Dorsolateral prefrontal cortex (tissue), 120 donors: ENCODE measurements at regions of chr5 and their contacts with region 1.

Region 1: GRCh38 chr5:17216176-17216973 is 1.1 kb upstream of the BASP1 start:
- DNase-seq: peak; percentile 71 to 84 (median 80)
- H3K4me3 ChIP-seq: peak overlapping the region; percentile 36 to 81 (median 67)
- H3K27ac ChIP-seq: peak overlapping the region in 58 of 59 donors; percentile 3 to 95 (median 82)
- H3K27me3 ChIP-seq: peaks cover 0 to 30% (median 0%) of the 10 kb centered on the region in 45 donors
- CTCF ChIP-seq: peak; percentile 69 to 96 (median 86)

Region 2: GRCh38 chr5:17400724-17401464 is 184.5 kb after region 1 on chr5:
- intact Hi-C with region 1: loop called in 1 of 2 experiments (anchors 5 kb)
- DNase-seq: no peak
- H3K4me3 ChIP-seq: no peak overlapping the region
- H3K27ac ChIP-seq: no peak overlapping the region
- H3K27me3 ChIP-seq: peaks cover 0 to 29% (median 0%) of the 10 kb centered on the region in 45 donors
- CTCF ChIP-seq: no peak

Region 3: DNA sequence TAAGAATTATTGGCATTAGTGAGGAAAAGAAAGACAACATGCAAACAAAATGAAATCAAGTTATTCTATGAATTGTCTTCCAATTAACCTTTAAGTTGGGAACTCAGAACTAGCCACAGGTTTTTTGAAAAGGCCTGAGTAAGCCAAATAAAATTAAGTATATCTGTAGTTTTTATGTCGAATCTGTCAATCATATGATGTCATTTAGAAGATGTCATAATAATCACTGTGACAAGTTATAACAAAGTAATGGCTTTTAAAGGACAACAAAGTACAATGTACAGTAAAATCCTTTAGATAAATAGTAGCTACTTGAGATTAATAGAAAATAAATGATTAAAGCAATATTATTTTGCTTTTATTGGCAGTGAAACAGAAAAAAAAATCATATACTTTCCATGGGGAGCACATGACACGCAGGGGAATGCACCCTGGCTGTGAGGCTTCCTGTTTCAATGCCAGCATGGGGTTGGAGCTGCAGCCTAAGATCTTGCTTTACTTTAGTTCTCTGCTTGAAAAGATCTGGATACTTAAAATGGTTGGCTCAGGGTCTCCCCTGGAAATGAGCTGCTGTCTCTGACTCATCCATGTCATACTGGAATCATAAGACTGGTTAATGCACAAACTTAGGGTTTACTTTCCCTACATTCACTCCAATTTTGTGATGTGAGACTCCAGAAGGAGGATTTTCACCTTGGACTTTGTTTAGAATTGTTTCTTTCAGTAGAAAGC is 702.2 kb after region 1 on chr5:
- intact Hi-C with region 1: loop called in 1 of 2 experiments (anchors 5 kb)
- DNase-seq: no peak
- H3K4me3 ChIP-seq: no peak overlapping the region
- H3K27ac ChIP-seq: peak overlapping the region in 47 of 59 donors; percentile 5 to 80 (median 52)
- H3K27me3 ChIP-seq: no peaks in the 10 kb centered on the region
- CTCF ChIP-seq: no peak

Region 4: GRCh38 chr5:18113721-18114120 is 897.3 kb after region 1 on chr5:
- intact Hi-C with region 1: loop called (anchors 5 kb)
- DNase-seq: peak in 2 of 10 donors; percentile 10 to 32
- H3K4me3 ChIP-seq: peak overlapping the region in 34 of 59 donors; percentile 5 to 48 (median 26)
- H3K27ac ChIP-seq: peak overlapping the region in 46 of 59 donors; percentile 0 to 85 (median 58)
- H3K27me3 ChIP-seq: peaks cover 0 to 2% (median 0%) of the 10 kb centered on the region in 45 donors
- CTCF ChIP-seq: peak in 55 of 56 donors; percentile 17 to 64 (median 49)

Region 5: GRCh38 chr5:18305297-18305924 is 1089.0 kb after region 1 on chr5:
- intact Hi-C with region 1: loop called (anchors 5 kb)
- DNase-seq: peak in 3 of 10 donors; percentile 40 to 58 (median 44)
- H3K4me3 ChIP-seq: peak overlapping the region in 25 of 59 donors; percentile 1 to 46 (median 21)
- H3K27ac ChIP-seq: peak overlapping the region in 3 of 59 donors; percentile 5 to 25 (median 11)
- H3K27me3 ChIP-seq: peaks cover 0 to 2% (median 0%) of the 10 kb centered on the region in 45 donors
- CTCF ChIP-seq: peak; percentile 54 to 93 (median 76)

Region 6: DNA sequence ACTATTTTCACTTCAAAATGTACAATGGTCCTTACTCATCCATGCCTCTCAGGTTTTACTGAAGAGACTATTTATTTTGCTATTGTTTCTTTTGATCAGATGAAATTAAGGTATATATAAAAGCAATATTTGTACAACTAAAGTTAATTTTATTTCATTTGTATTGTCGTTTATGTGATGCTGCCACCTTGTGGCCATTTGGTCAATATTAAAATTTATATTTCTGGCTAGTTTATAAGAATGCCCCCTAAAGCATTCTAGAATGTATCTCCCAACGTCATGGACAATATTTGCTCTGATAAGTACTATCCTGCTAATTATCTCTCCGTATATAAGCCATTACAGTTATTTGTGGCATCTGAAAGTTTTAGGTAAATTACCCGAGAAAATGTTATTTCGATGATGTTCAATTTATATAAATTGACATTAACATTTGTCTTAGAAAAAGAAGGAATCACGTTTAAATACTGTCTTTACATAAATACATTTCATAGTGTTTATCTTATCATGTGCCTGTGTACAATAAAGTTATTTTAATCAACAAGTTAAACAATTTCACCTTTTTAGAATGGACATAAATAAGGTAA is 1097.9 kb after region 1 on chr5:
- intact Hi-C with region 1: loop called (anchors 5 kb)
- DNase-seq: no peak
- H3K4me3 ChIP-seq: no peak overlapping the region
- H3K27ac ChIP-seq: no peak overlapping the region
- H3K27me3 ChIP-seq: no peaks in the 10 kb centered on the region
- CTCF ChIP-seq: peak; percentile 44 to 87 (median 66)